ENCODE measurements at regions of chr13 and their contacts with region 1.

Region 1: GRCh38 chr13:101144808-101145419 is 271.4 kb downstream of the NALCN start:
- DNase-seq: peak; percentile 39
- ATAC-seq: peak; percentile 72
- H3K4me3 ChIP-seq: no peak overlapping the region
- H3K27ac ChIP-seq: no peak overlapping the region
- H3K4me1 ChIP-seq: no peaks in the 10 kb centered on the region
- H3K27me3 ChIP-seq: no peaks in the 10 kb centered on the region; the same call in 1 of the 2 replicates
- CTCF ChIP-seq: peak; percentile 34 to 71 (median 47); a peak in 5 of 6 replicates
- POLR2A ChIP-seq: no peak
- RAD21 ChIP-seq: peak; percentile 72

Region 2: GRCh38 chr13:101155920-101156319 is 11.0 kb after region 1 on chr13:
- CTCF ChIA-PET with region 1: interaction called, 13 read pairs
- POLR2A ChIA-PET with region 1: no interaction called
- RAD21 ChIA-PET with region 1: no interaction called
- intact Hi-C with region 1: no loop called
- DNase-seq: no peak
- ATAC-seq: no peak
- H3K4me3 ChIP-seq: no peak overlapping the region
- H3K27ac ChIP-seq: no peak overlapping the region
- H3K4me1 ChIP-seq: no peaks in the 10 kb centered on the region
- H3K27me3 ChIP-seq: peaks cover 4% of the 10 kb centered on the region; the same call in 1 of the 2 replicates
- CTCF ChIP-seq: peak in 2 of 3 experiments; percentile 51 to 59; a peak in 3 of 6 replicates
- POLR2A ChIP-seq: no peak
- RAD21 ChIP-seq: peak; percentile 12; the same call in 1 of the 2 replicates

Region 3: DNA sequence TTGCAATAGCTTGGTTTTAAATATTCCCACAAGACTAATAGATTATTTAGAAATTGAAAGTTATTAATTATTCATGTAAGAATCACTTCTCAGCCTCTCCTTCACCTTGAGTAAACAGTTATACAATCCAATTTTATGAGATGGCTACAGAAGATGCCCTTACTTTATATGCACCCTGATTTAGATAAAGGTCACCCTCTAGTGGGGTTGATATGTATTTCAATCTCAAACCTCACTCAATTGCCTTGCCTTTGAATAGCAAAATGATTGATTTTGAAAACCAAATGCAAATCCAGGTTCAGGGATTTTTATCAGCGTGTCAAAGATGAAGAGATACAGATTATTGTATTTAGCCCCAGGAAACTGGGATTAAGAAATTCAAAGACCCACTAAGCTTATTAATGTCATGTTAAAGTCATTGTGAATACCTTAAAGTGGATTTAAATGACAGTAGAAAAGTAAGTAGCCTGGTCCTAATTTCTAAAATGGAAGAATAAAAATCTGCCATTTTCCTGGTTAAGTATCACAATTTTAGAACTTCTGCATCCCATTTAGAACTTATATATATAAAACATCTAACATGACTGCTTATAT is 612.6 kb after region 1 on chr13:
- CTCF ChIA-PET with region 1: interaction called, 6 read pairs
- POLR2A ChIA-PET with region 1: no interaction called
- RAD21 ChIA-PET with region 1: no interaction called
- intact Hi-C with region 1: loop called (anchors 2 kb)
- DNase-seq: no peak
- ATAC-seq: no peak
- H3K4me3 ChIP-seq: no peak overlapping the region
- H3K27ac ChIP-seq: no peak overlapping the region
- H3K4me1 ChIP-seq: no peaks in the 10 kb centered on the region
- H3K27me3 ChIP-seq: no peaks in the 10 kb centered on the region
- CTCF ChIP-seq: peak in 2 of 3 experiments; percentile 11 to 24; a peak in 2 of 6 replicates
- POLR2A ChIP-seq: no peak
- RAD21 ChIP-seq: peak; percentile 42

Region 4: DNA sequence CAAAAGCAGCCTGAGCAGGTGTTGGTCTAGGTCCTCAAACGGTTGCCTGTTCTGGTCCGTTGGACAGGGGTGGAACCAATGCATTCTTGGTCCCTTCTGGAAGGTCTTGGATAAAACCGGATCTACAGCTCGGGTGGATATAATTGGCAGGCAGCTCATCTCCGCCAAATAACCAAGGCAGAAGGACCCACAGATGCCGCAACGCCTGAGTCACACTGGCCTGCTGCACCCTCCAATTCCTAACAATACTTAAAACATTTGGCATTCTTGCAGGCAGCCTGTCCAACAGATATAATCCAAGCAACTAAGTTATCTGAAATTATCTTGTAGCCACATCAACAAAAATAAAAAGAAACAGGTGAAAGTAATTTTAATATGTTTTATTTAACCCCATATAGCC is 1315.9 kb after region 1 on chr13:
- CTCF ChIA-PET with region 1: no interaction called
- POLR2A ChIA-PET with region 1: no interaction called
- RAD21 ChIA-PET with region 1: no interaction called
- intact Hi-C with region 1: loop called (anchors 1 kb)
- DNase-seq: no peak
- ATAC-seq: no peak
- H3K4me3 ChIP-seq: no peak overlapping the region
- H3K27ac ChIP-seq: no peak overlapping the region
- H3K4me1 ChIP-seq: peaks cover 0 to 6% of the 10 kb centered on the region in 2 experiments; a peak in 1 of 4 replicates
- H3K27me3 ChIP-seq: no peaks in the 10 kb centered on the region; the same call in 1 of the 2 replicates
- CTCF ChIP-seq: no peak
- POLR2A ChIP-seq: no peak
- RAD21 ChIP-seq: no peak

Region 5: GRCh38 chr13:102724923-102725322 is 1580.0 kb after region 1 on chr13:
- CTCF ChIA-PET with region 1: interaction called, 5 read pairs
- POLR2A ChIA-PET with region 1: no interaction called
- RAD21 ChIA-PET with region 1: no interaction called
- intact Hi-C with region 1: loop called (anchors 10 kb)
- DNase-seq: no peak
- ATAC-seq: peak; percentile 87
- H3K4me3 ChIP-seq: no peak overlapping the region
- H3K27ac ChIP-seq: no peak overlapping the region
- H3K4me1 ChIP-seq: peaks cover 0 to 4% of the 10 kb centered on the region in 2 experiments; a peak in 2 of 4 replicates
- H3K27me3 ChIP-seq: peaks cover 37% of the 10 kb centered on the region
- CTCF ChIP-seq: peak; percentile 51 to 64 (median 51); a peak in 5 of 6 replicates
- POLR2A ChIP-seq: no peak
- RAD21 ChIP-seq: peak; percentile 68

Region 6: DNA sequence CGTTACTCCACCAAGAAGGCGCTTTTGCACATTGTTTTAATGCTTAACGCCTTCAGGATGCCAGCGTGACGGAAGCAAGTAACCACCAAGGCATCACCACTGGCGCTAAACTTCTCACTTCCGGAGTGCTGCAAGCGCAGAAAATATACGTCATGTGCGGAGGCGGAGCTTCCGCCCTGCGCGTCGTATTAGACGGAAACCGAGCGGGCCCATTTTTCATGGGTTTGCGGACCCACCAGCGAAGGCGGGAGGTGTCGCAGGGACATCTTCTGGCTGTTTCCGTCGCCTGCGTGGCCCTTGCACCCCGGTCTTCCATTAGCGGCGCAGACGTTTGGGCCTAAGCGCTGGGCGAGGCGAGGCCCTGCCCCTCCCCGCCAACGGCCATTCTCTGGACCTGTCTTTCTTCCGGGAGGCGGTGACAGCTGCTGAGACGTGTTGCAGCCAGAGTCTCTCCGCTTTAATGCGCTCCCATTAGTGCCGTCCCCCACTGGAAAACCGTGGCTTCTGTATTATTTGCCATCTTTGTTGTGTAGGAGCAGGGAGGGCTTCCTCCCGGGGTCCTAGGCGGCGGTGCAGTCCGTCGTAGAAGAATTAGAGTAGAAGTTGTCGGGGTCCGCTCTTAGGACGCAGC is 1700.8 kb after region 1 on chr13 and contains the start of gene ERCC5:
- CTCF ChIA-PET with region 1: no interaction called
- POLR2A ChIA-PET with region 1: no interaction called
- RAD21 ChIA-PET with region 1: no interaction called
- intact Hi-C with region 1: loop called (anchors 5 kb)
- DNase-seq: peak; percentile 95
- ATAC-seq: peak; percentile 89
- H3K4me3 ChIP-seq: peak within 1 kb of the TSS; percentile 97 to 98
- H3K27ac ChIP-seq: peak within 1 kb of the TSS; percentile 89
- H3K4me1 ChIP-seq: peaks cover 0 to 18% of the 10 kb centered on the region in 2 experiments; a peak in 3 of 4 replicates
- H3K27me3 ChIP-seq: no peaks in the 10 kb centered on the region
- CTCF ChIP-seq: no peak
- POLR2A ChIP-seq: peak; percentile 87
- RAD21 ChIP-seq: no peak
- total RNA-seq, gene ERCC5: 25.6 TPM